ENCODE measurements at regions of chr3 and their contacts with region 1.

Region 1: DNA sequence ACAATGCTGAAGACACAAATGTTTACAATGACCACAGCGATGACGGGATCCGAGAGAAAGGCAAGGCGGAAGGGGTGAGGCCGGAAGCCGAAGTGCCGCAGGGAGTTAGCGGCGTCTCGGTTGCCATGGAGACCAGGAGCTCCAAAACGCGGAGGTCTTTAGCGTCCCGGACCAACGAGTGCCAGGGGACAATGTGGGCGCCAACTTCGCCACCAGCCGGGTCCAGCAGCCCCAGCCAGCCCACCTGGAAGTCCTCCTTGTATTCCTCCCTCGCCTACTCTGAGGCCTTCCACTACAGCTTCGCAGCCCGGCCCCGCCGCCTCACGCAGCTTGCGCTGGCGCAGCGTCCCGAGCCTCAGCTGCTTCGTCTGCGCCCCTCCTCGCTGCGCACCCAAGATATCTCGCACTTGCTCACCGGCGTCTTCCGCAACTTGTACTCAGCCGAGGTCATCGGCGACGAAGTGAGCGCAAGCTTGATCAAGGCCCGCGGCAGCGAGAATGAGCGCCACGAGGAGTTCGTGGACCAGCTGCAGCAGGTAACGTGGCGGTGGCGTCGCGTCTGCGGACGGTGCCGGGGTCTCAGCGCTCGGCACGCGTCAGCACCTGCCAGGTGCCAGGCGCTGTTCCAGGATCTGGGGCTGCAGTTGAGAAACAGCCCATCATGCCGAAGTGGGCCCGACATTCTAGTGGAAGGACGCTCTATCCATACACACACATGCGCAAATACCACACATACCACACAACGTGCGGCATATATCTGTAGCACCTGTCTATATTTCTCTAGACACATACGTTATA is at the start of gene DLEC1:
- DNase-seq: peak; percentile 57
- ATAC-seq: peak; percentile 74
- H3K4me3 Mint-ChIP-seq: peak within 1 kb of the TSS; percentile 86
- H3K27ac Mint-ChIP-seq: peak within 1 kb of the TSS; percentile 54
- H3K4me1 Mint-ChIP-seq: peaks cover 21% of the 10 kb centered on the region
- H3K27me3 Mint-ChIP-seq: peaks cover 5% of the 10 kb centered on the region
- CTCF ChIP-seq: no peak
- total RNA-seq, gene DLEC1: 0.10 and 0.11 TPM in 2 replicates

Region 2: DNA sequence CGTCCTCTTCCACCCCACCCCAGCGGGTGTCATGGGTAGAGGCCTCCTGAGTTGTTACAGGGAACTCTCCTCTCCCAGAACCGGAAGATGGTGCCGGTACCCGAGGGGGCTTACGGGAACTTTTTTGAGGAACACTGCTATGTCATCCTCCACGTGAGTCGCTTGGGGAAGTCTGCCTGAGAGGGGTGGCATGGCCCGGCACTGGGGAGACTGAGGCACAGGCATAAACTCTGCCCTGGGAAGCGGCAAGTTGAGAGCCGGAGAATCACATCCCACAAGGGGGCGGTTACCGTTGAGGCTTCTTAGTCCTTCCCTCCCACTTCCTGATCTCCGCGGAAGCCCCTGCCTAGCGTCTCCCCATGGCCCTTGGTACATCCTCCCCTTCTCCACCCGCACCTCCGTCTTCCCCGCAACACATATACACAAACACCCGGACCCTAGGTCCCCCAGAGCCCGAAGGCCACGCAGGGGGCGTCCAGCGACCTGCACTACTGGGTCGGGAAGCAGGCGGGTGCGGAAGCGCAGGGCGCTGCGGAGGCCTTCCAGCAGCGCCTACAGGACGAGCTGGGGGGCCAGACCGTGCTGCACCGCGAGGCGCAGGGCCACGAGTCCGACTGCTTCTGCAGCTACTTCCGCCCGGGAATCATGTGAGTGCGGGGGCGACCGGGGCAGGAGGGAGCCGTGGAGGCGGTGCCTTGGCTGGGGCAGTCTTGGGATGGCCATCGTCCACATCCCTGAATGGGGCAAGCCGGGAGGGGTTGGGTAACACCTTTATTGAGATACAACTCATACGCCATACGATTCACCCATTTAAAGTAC is 45.3 kb before region 1 on chr3:
- CTCF ChIA-PET with region 1: interaction called, 8 read pairs
- POLR2A ChIA-PET with region 1: interaction called, 8 read pairs
- intact Hi-C with region 1: loop called (anchors 1 kb)
- DNase-seq: peak; percentile 61
- ATAC-seq: peak; percentile 51
- H3K4me3 Mint-ChIP-seq: peak overlapping the region; percentile 99
- H3K27ac Mint-ChIP-seq: peak overlapping the region; percentile 95
- H3K4me1 Mint-ChIP-seq: peaks cover 49% of the 10 kb centered on the region
- H3K27me3 Mint-ChIP-seq: no peaks in the 10 kb centered on the region
- CTCF ChIP-seq: no peak

Region 3: GRCh38 chr3:38004415-38005076 is 34.8 kb before region 1 on chr3:
- CTCF ChIA-PET with region 1: interaction called, 6 read pairs
- POLR2A ChIA-PET with region 1: no interaction called
- intact Hi-C with region 1: loop called (anchors 1 kb)
- DNase-seq: no peak
- ATAC-seq: peak; percentile 73
- H3K4me3 Mint-ChIP-seq: no peak overlapping the region
- H3K27ac Mint-ChIP-seq: peak overlapping the region; percentile 10
- H3K4me1 Mint-ChIP-seq: peaks cover 4% of the 10 kb centered on the region
- H3K27me3 Mint-ChIP-seq: no peaks in the 10 kb centered on the region
- CTCF ChIP-seq: no peak

Region 4: GRCh38 chr3:38070013-38070412 is 30.7 kb after region 1 on chr3:
- CTCF ChIA-PET with region 1: no interaction called
- POLR2A ChIA-PET with region 1: no interaction called
- intact Hi-C with region 1: no loop called
- DNase-seq: no peak
- ATAC-seq: no peak
- H3K4me3 Mint-ChIP-seq: no peak overlapping the region
- H3K27ac Mint-ChIP-seq: no peak overlapping the region
- H3K4me1 Mint-ChIP-seq: no peaks in the 10 kb centered on the region
- H3K27me3 Mint-ChIP-seq: peaks cover 2% of the 10 kb centered on the region
- CTCF ChIP-seq: no peak

Region 5: GRCh38 chr3:38204599-38205471 is 165.5 kb after region 1 on chr3:
- CTCF ChIA-PET with region 1: no interaction called
- POLR2A ChIA-PET with region 1: interaction called, 14 read pairs
- intact Hi-C with region 1: no loop called
- DNase-seq: no peak
- ATAC-seq: no peak
- H3K4me3 Mint-ChIP-seq: no peak overlapping the region
- H3K27ac Mint-ChIP-seq: no peak overlapping the region
- H3K4me1 Mint-ChIP-seq: peaks cover 27% of the 10 kb centered on the region
- H3K27me3 Mint-ChIP-seq: no peaks in the 10 kb centered on the region
- CTCF ChIP-seq: no peak